ENCODE measurements at regions of chr4 and their contacts with region 1.

Region 1: DNA sequence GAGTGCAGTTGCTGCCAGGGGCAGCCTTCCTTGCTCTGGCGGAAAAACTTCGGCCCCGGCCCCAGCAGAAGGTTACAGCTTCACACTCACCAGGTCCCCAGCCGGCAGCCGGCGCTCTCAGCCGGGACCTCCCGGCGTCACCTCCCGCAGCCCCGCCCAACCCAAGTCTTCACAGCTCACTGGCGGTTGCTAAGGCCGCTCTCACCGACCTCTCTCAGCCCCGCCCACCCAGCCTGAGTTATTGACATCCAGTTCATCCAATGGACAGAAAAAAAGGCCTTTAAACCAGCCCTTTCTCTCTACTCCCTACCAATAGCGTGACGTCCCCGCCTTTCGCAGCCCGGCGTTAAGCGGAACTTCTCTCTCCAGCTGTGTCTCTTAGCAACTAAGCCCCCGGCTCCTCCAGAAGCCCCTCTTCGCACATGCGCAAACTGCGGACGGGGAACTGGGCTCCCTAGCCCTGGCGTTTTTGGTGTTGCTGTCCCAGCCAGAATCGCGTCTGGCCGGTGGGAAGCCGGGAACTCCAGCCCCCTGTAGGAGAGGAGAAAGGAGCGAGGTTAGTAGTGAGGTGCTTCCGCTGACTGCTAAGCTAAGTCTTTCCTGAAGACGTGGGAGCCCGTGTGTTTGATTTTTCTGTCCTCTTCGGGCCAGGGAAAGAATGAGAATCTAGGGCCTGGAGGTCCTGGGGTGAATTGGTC is at the start of gene BBS12:
- DNase-seq: peak; percentile 90 to 99 (median 99)
- ATAC-seq: peak; percentile 99
- H3K4me3 ChIP-seq: peak within 1 kb of the TSS; percentile 97
- H3K4me3 Mint-ChIP-seq: peak within 1 kb of the TSS; percentile 80 to 100 (median 97)
- H3K27ac ChIP-seq: peak within 1 kb of the TSS; percentile 74
- H3K27ac Mint-ChIP-seq: peak within 1 kb of the TSS; percentile 92 to 99 (median 98)
- H3K4me1 ChIP-seq: peaks cover 9 to 17% of the 10 kb centered on the region in 2 donors
- H3K4me1 Mint-ChIP-seq: peaks cover 6 to 44% (median 36%) of the 10 kb centered on the region in 7 donors
- H3K27me3 ChIP-seq: no peaks in the 10 kb centered on the region
- H3K27me3 Mint-ChIP-seq: no peaks in the 10 kb centered on the region
- total RNA-seq, gene BBS12: 0.71 to 4.3 (median 2.3) TPM

Region 2: DNA sequence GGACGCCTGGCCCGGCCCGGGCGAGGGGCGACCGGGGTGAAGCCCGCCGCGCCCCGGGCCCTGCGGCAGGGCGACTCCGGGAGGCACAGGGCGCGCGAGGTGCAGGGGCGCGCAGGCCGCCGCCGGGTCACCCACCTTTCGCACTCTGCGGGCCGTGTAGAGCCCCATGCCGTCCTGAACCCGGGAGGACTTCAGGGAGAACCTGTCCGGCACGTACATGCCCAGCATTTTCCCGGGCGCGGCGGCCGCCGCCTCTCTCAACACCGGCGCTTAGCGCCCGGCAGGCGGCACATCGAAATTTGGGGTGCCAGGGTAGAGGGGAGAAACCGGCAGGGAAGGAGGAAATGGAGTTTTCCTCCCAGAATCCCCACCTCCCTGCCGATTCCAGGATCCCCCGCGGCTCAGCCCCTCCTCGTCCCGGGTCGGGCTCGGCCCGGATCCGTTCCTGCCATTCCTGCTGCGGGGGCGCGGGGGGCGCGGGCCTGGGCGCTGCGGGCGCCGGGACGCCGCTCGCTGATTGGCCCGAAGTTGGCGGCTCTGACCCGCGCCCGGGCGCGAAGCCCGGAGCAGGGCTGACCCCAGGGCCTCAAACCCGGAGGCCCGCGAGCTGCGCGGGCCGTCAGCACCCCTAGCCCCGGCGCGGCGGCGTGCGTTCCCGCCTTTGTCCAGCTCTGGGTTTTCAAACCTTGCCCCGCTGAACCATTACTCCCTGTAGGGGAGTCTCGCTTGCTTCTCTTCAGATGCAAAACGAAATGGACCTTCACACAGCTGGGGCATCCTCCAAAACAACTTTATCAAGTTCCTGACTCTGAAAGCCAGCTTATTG is 1809.9 kb before region 1 on chr4 and contains the start of gene PRDM5:
- CTCF ChIA-PET with region 1: no interaction called
- POLR2A ChIA-PET with region 1: no interaction called
- intact Hi-C with region 1: loop called in 1 of 2 experiments (anchors 10 kb)
- DNase-seq: peak; percentile 6 to 37 (median 22)
- ATAC-seq: peak; percentile 67
- H3K4me3 ChIP-seq: peak within 1 kb of the TSS; percentile 72
- H3K4me3 Mint-ChIP-seq: peak within 1 kb of the TSS; percentile 82 to 98 (median 96)
- H3K27ac ChIP-seq: peak within 1 kb of the TSS; percentile 18
- H3K27ac Mint-ChIP-seq: peak within 1 kb of the TSS in 8 of 9 donors; percentile 75 to 93 (median 82)
- H3K4me1 ChIP-seq: peaks cover 0 to 5% of the 10 kb centered on the region in 2 donors
- H3K4me1 Mint-ChIP-seq: peaks cover 8 to 16% (median 13%) of the 10 kb centered on the region in 7 donors
- H3K27me3 ChIP-seq: no peaks in the 10 kb centered on the region
- H3K27me3 Mint-ChIP-seq: peaks cover 0 to 69% (median 0%) of the 10 kb centered on the region in 5 donors
- total RNA-seq, gene PRDM5: 0.29 to 1.1 (median 0.72) TPM in 4 of 5 experiments, not detected in the other

Region 3: DNA sequence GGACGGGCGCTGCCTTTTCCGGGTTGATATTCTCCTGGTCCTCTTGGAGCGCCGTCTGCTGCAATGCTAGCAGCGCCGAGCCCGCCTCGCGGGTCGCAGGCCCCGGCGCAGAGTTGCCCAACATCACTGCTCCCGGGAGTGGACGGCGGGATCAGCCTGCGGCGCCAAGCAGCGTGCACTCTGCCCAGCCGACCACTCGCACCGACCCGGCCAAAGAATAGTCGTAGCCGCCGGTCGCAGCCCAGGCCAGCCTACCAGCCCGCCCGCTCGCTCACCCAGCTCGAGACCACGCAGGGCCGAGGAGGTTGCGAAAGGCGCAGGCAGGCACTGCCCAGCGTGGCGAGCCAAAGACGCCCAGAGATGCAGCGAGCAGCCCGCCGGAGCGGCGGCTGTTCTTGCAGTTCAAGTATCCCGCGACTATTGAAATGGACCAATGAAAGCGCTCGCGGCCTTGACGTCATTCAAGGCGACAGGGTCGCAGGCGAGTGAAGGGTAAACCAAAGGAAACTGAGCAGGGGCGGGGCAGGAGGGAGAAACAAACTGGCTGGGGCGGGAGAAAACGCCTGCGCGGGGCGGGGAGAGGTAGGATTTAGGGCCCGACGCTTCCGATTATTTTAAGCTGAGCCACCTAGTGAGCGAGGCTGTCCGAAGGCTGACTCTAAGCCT is 908.8 kb before region 1 on chr4 and contains the start of gene CCNA2:
- CTCF ChIA-PET with region 1: no interaction called
- POLR2A ChIA-PET with region 1: no interaction called
- intact Hi-C with region 1: loop called (anchors 1 kb)
- DNase-seq: peak; percentile 86 to 95 (median 93)
- ATAC-seq: peak; percentile 99
- H3K4me3 ChIP-seq: peak within 1 kb of the TSS; percentile 85
- H3K4me3 Mint-ChIP-seq: peak within 1 kb of the TSS; percentile 85 to 100 (median 92)
- H3K27ac ChIP-seq: peak within 1 kb of the TSS; percentile 60
- H3K27ac Mint-ChIP-seq: peak within 1 kb of the TSS; percentile 72 to 97 (median 93)
- H3K4me1 ChIP-seq: peaks cover 0 to 9% of the 10 kb centered on the region in 2 donors
- H3K4me1 Mint-ChIP-seq: peaks cover 4 to 44% (median 12%) of the 10 kb centered on the region in 7 donors
- H3K27me3 ChIP-seq: no peaks in the 10 kb centered on the region
- H3K27me3 Mint-ChIP-seq: peaks cover 0 to 3% (median 0%) of the 10 kb centered on the region in 5 donors
- total RNA-seq, gene CCNA2: 0.24 to 63.7 (median 1.2) TPM

Region 4: DNA sequence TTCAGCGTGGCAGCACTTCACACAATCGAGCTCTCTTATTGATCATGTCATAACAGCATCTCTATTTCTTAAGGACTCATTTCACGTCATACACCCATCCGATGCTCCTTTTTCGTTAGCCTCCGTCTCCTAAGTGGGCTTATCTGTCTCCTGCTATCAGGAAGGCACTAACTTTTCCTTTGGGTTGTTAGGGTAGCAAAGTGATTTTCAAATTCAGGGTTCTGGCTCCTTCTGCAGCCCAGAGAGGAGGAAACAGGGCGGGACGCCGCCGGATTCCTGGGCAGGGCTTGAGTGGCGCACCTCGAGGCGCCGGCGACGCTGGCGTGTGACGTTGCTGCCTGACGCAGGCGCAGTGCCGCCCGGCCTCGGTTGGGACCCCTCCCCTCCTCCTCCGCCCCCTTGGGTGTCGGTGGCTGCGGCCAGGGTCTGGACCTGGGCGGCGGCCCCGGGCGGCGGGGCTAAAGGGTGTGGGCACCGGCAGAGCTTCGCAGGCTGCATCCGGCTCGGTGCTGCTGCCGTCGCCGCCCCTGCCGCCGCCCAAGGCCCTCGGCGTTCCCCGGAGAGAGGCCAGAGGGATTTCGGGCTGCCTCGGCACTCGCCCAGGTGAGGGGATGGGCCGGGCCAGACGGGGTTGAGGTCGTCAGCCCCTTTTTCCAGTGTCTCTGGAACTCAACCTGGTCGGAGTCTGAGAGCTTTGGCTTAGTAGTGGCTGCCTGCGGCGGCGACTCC is 580.3 kb before region 1 on chr4 and contains the start of gene BLTP1:
- CTCF ChIA-PET with region 1: no interaction called
- POLR2A ChIA-PET with region 1: no interaction called
- intact Hi-C with region 1: loop called in 1 of 2 experiments (anchors 1 kb)
- DNase-seq: peak; percentile 81 to 92 (median 87)
- ATAC-seq: peak; percentile 95
- H3K4me3 ChIP-seq: peak within 1 kb of the TSS; percentile 96
- H3K4me3 Mint-ChIP-seq: peak within 1 kb of the TSS; percentile 79 to 98 (median 98)
- H3K27ac ChIP-seq: peak within 1 kb of the TSS; percentile 85
- H3K27ac Mint-ChIP-seq: peak within 1 kb of the TSS; percentile 90 to 100 (median 97)
- H3K4me1 ChIP-seq: peaks cover 22 to 28% of the 10 kb centered on the region in 2 donors
- H3K4me1 Mint-ChIP-seq: peaks cover 41 to 84% (median 72%) of the 10 kb centered on the region in 7 donors
- H3K27me3 ChIP-seq: no peaks in the 10 kb centered on the region
- H3K27me3 Mint-ChIP-seq: no peaks in the 10 kb centered on the region
- total RNA-seq, gene BLTP1: 45.9 to 86.6 (median 72.8) TPM

Region 5: DNA sequence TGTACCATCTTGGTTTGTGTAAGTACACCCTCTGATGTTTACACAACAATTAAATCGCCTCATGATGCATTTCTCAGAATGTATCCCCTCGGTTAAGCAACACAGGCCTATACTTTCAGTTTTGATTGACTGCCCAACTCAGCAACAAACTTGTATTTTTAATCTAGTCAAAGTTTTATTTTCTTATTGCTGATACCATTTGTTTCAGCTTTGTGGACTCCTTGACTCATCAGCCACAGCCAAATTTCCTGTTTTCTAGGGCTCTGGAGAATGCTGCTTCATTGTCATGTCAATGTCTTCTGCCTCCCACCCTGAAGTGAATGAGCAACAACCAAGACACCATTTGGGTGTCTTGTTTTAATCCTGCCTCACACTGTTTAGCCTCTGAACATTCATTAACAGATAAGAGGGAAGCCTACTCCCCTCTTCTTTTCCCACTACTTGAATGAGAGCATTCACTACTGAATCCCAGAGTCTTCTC is 14.0 kb after region 1 on chr4:
- CTCF ChIA-PET with region 1: no interaction called
- POLR2A ChIA-PET with region 1: no interaction called
- intact Hi-C with region 1: loop called in 1 of 2 experiments (anchors 1 kb)
- DNase-seq: no peak
- ATAC-seq: peak; percentile 52
- H3K4me3 ChIP-seq: no peak overlapping the region
- H3K4me3 Mint-ChIP-seq: peak overlapping the region in 1 of 10 donors; percentile 47
- H3K27ac ChIP-seq: no peak overlapping the region
- H3K27ac Mint-ChIP-seq: peak overlapping the region in 1 of 9 donors; percentile 85
- H3K4me1 ChIP-seq: no peaks in the 10 kb centered on the region
- H3K4me1 Mint-ChIP-seq: peaks cover 0 to 32% (median 0%) of the 10 kb centered on the region in 7 donors
- H3K27me3 ChIP-seq: no peaks in the 10 kb centered on the region
- H3K27me3 Mint-ChIP-seq: peaks cover 14 to 20% (median 18%) of the 10 kb centered on the region in 5 donors

Region 6: DNA sequence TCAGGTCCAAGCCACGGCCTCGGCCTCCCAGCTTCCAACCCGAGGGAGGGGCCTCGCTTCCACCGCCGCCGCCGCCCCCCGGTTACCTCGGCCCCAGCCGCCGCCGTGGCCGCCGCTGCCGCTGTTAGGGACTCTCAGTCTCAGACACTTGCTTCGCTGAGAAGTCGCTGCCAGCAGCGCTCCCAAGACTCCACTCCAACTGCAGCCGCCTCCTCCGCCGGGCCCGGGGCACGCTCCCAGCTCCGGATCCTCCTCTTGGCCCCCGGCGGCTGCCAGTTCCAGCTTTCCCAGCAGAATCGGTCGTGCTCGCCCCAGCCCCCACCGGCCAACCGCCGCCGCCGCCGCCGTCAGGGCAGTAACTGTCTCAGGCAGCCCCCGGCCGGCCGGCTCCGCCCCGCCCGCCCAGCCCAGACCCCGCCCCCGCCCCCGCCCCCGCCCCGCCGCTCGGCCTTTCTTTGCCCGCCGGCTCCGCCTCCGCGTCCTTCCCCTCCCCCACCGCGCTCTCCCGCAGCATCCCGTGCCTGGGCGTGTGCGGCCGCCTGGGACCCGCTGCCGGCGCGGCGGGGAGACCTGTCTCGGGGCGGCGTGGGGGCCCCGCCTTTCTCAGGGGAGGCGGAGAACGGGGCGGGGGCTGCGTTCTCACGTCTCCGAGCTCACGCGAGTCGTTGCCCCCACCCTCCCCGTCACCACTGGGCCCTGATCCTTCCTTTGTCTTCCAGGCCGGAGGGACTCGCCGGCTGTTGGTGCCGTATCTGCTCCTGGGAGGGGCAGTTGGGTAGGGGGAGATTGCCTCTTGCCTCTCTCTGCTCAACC is 1980.1 kb after region 1 on chr4 and contains the start of gene ANKRD50:
- CTCF ChIA-PET with region 1: no interaction called
- POLR2A ChIA-PET with region 1: no interaction called
- intact Hi-C with region 1: loop called in 1 of 2 experiments (anchors 2 kb)
- DNase-seq: peak; percentile 53 to 75 (median 68)
- ATAC-seq: peak; percentile 84
- H3K4me3 ChIP-seq: peak within 1 kb of the TSS; percentile 57
- H3K4me3 Mint-ChIP-seq: peak within 1 kb of the TSS in 7 of 10 donors; percentile 77 to 94 (median 93)
- H3K27ac ChIP-seq: peak within 1 kb of the TSS; percentile 56
- H3K27ac Mint-ChIP-seq: peak within 1 kb of the TSS in 8 of 9 donors; percentile 47 to 93 (median 84)
- H3K4me1 ChIP-seq: peaks cover 4 to 7% of the 10 kb centered on the region in 2 donors
- H3K4me1 Mint-ChIP-seq: peaks cover 4 to 9% (median 6%) of the 10 kb centered on the region in 7 donors
- H3K27me3 ChIP-seq: no peaks in the 10 kb centered on the region
- H3K27me3 Mint-ChIP-seq: peaks cover 0 to 22% (median 4%) of the 10 kb centered on the region in 5 donors
- total RNA-seq, gene ANKRD50: 0.15 to 3.5 (median 0.65) TPM

Measured in naive thymus-derived CD4-positive, alpha-beta T cell (primary cell).